CD8-positive, alpha-beta T cell (primary cell): ENCODE measurements at regions of chr3 and their contacts with region 1.

Region 1: GRCh38 chr3:70038693-70039092 is 39.2 kb downstream of the SAMMSON start:
- DNase-seq: no peak
- ATAC-seq: no peak
- H3K4me3 ChIP-seq: no peak overlapping the region
- H3K4me3 Mint-ChIP-seq: no peak overlapping the region
- H3K27ac ChIP-seq: no peak overlapping the region
- H3K27ac Mint-ChIP-seq: no peak overlapping the region
- H3K4me1 ChIP-seq: no peaks in the 10 kb centered on the region
- H3K4me1 Mint-ChIP-seq: no peaks in the 10 kb centered on the region
- H3K27me3 ChIP-seq: no peaks in the 10 kb centered on the region
- H3K27me3 Mint-ChIP-seq: peaks cover 2% of the 10 kb centered on the region
- CTCF ChIP-seq: no peak

Region 2: GRCh38 chr3:70049761-70050160 is 11.1 kb after region 1 on chr3:
- CTCF ChIA-PET with region 1: no interaction called
- POLR2A ChIA-PET with region 1: no interaction called
- intact Hi-C with region 1: loop called in 1 of 2 experiments (anchors 1 kb)
- DNase-seq: no peak
- ATAC-seq: no peak
- H3K4me3 ChIP-seq: no peak overlapping the region
- H3K4me3 Mint-ChIP-seq: no peak overlapping the region
- H3K27ac ChIP-seq: no peak overlapping the region
- H3K27ac Mint-ChIP-seq: no peak overlapping the region
- H3K4me1 ChIP-seq: no peaks in the 10 kb centered on the region
- H3K4me1 Mint-ChIP-seq: no peaks in the 10 kb centered on the region
- H3K27me3 ChIP-seq: no peaks in the 10 kb centered on the region
- H3K27me3 Mint-ChIP-seq: peaks cover 6% of the 10 kb centered on the region
- CTCF ChIP-seq: no peak